Endothelial cell of umbilical vein (primary cell): ENCODE measurements at regions of chr2 and their contacts with region 1.

Region 1: GRCh38 chr2:211132586-211132985 is 576.2 kb downstream of the CPS1 start:
- DNase-seq: peak; percentile 51
- H3K4me3 ChIP-seq: no peak overlapping the region
- H3K27ac ChIP-seq: no peak overlapping the region
- H3K4me1 ChIP-seq: peaks cover 14% of the 10 kb centered on the region
- H3K27me3 ChIP-seq: no peaks in the 10 kb centered on the region
- CTCF ChIP-seq: no peak
- POLR2A ChIP-seq: no peak

Region 2: GRCh38 chr2:211408516-211408915 is 275.9 kb after region 1 on chr2:
- CTCF ChIA-PET with region 1: no interaction called
- POLR2A ChIA-PET with region 1: no interaction called
- dilution Hi-C with region 1: no loop called
- intact Hi-C with region 1: loop called (anchors 5 kb)
- DNase-seq: peak; percentile 18
- H3K4me3 ChIP-seq: no peak overlapping the region
- H3K27ac ChIP-seq: peak overlapping the region; percentile 84
- H3K4me1 ChIP-seq: peaks cover 15% of the 10 kb centered on the region
- H3K27me3 ChIP-seq: no peaks in the 10 kb centered on the region
- CTCF ChIP-seq: no peak
- POLR2A ChIP-seq: no peak